ENCODE measurements at regions of chr2 and their contacts with region 1.

Region 1: GRCh38 chr2:38390947-38391346 is 13.9 kb upstream of the ATL2 start:
- DNase-seq: no peak
- ATAC-seq: no peak
- H3K4me3 Mint-ChIP-seq: no peak overlapping the region
- H3K27ac Mint-ChIP-seq: no peak overlapping the region
- H3K4me1 Mint-ChIP-seq: peaks cover 35% of the 10 kb centered on the region
- H3K27me3 Mint-ChIP-seq: peaks cover 10% of the 10 kb centered on the region

Region 2: GRCh38 chr2:38377050-38377828 is 13.7 kb before region 1 on chr2 and contains the start of gene ATL2:
- CTCF ChIA-PET with region 1: interaction called, 10 read pairs
- POLR2A ChIA-PET with region 1: interaction called, 5 read pairs
- DNase-seq: peak; percentile 97
- ATAC-seq: peak; percentile 89
- H3K4me3 Mint-ChIP-seq: peak within 1 kb of the TSS; percentile 97
- H3K27ac Mint-ChIP-seq: peak within 1 kb of the TSS; percentile 94
- H3K4me1 Mint-ChIP-seq: peaks cover 47% of the 10 kb centered on the region
- H3K27me3 Mint-ChIP-seq: no peaks in the 10 kb centered on the region
- total RNA-seq, gene ATL2: 50.5 to 58.7 TPM

Measured in activated CD8-positive, alpha-beta T cell treated with anti-CD3 and anti-CD28 coated beads, Interleukin-2, amount 10 ng/mL, durations not matched to agents 7 days and 5 days (primary cell).